ENCODE measurements at regions of chr9 and their contacts with region 1.

Region 1: GRCh38 chr9:114082017-114082762 is 4.1 kb upstream of the AMBP start:
- DNase-seq: peak; percentile 90 to 97 (median 94)
- H3K4me3 ChIP-seq: no peak overlapping the region
- H3K27ac ChIP-seq: peak overlapping the region; percentile 81 to 82
- H3K4me1 ChIP-seq: peaks cover 0 to 30% (median 24%) of the 10 kb centered on the region in 3 donors
- H3K27me3 ChIP-seq: no peaks in the 10 kb centered on the region
- CTCF ChIP-seq: peak; percentile 88

Region 2: GRCh38 chr9:114291064-114291474 is 208.9 kb after region 1 on chr9:
- intact Hi-C with region 1: loop called (anchors 10 kb)
- DNase-seq: peak; percentile 76 to 85 (median 80)
- H3K4me3 ChIP-seq: no peak overlapping the region
- H3K27ac ChIP-seq: no peak overlapping the region
- H3K4me1 ChIP-seq: peaks cover 0 to 6% (median 3%) of the 10 kb centered on the region in 3 donors
- H3K27me3 ChIP-seq: no peaks in the 10 kb centered on the region
- CTCF ChIP-seq: peak; percentile 90

Region 3: GRCh38 chr9:114662081-114662989 is 580.1 kb after region 1 on chr9:
- intact Hi-C with region 1: no loop called
- DNase-seq: peak in 4 of 5 donors; percentile 40 to 56 (median 50)
- H3K4me3 ChIP-seq: no peak overlapping the region
- H3K27ac ChIP-seq: no peak overlapping the region
- H3K4me1 ChIP-seq: no peaks in the 10 kb centered on the region
- H3K27me3 ChIP-seq: no peaks in the 10 kb centered on the region
- CTCF ChIP-seq: peak; percentile 73

Measured in kidney (tissue), 22 donors.